ENCODE measurements at regions of chr11 and their contacts with region 1.

Region 1: GRCh38 chr11:85977751-85978160 is 91.1 kb downstream of the PICALM start:
- DNase-seq: no peak
- ATAC-seq: no peak
- H3K4me3 ChIP-seq: no peak overlapping the region
- H3K4me3 Mint-ChIP-seq: no peak overlapping the region
- H3K27ac ChIP-seq: no peak overlapping the region
- H3K27ac Mint-ChIP-seq: peak overlapping the region in 1 of 9 donors; percentile 10
- H3K4me1 ChIP-seq: no peaks in the 10 kb centered on the region
- H3K4me1 Mint-ChIP-seq: peaks cover 0 to 13% (median 5%) of the 10 kb centered on the region in 7 donors
- H3K27me3 ChIP-seq: no peaks in the 10 kb centered on the region
- H3K27me3 Mint-ChIP-seq: no peaks in the 10 kb centered on the region

Region 2: GRCh38 chr11:85988780-85989179 is 11.0 kb after region 1 on chr11:
- CTCF ChIA-PET with region 1: no interaction called
- POLR2A ChIA-PET with region 1: interaction called, 3 read pairs
- intact Hi-C with region 1: loop called in 1 of 2 experiments (anchors 2 kb)
- DNase-seq: no peak
- ATAC-seq: no peak
- H3K4me3 ChIP-seq: no peak overlapping the region
- H3K4me3 Mint-ChIP-seq: no peak overlapping the region
- H3K27ac ChIP-seq: no peak overlapping the region
- H3K27ac Mint-ChIP-seq: peak overlapping the region in 5 of 9 donors; percentile 41 to 89 (median 52)
- H3K4me1 ChIP-seq: no peaks in the 10 kb centered on the region
- H3K4me1 Mint-ChIP-seq: peaks cover 5 to 23% (median 15%) of the 10 kb centered on the region in 7 donors
- H3K27me3 ChIP-seq: no peaks in the 10 kb centered on the region
- H3K27me3 Mint-ChIP-seq: no peaks in the 10 kb centered on the region

Region 3: GRCh38 chr11:86014221-86014620 is 36.5 kb after region 1 on chr11:
- CTCF ChIA-PET with region 1: no interaction called
- POLR2A ChIA-PET with region 1: no interaction called
- intact Hi-C with region 1: loop called in 1 of 2 experiments (anchors 5 kb)
- DNase-seq: no peak
- ATAC-seq: no peak
- H3K4me3 ChIP-seq: no peak overlapping the region
- H3K4me3 Mint-ChIP-seq: no peak overlapping the region
- H3K27ac ChIP-seq: no peak overlapping the region
- H3K27ac Mint-ChIP-seq: peak overlapping the region in 1 of 9 donors; percentile 43
- H3K4me1 ChIP-seq: peaks cover 0 to 4% of the 10 kb centered on the region in 2 donors
- H3K4me1 Mint-ChIP-seq: peaks cover 8 to 20% (median 15%) of the 10 kb centered on the region in 7 donors
- H3K27me3 ChIP-seq: no peaks in the 10 kb centered on the region
- H3K27me3 Mint-ChIP-seq: no peaks in the 10 kb centered on the region

Measured in naive thymus-derived CD4-positive, alpha-beta T cell (primary cell).